WTC11 (cell line): ENCODE measurements at regions of chr9 and their contacts with region 1.

Region 1: DNA sequence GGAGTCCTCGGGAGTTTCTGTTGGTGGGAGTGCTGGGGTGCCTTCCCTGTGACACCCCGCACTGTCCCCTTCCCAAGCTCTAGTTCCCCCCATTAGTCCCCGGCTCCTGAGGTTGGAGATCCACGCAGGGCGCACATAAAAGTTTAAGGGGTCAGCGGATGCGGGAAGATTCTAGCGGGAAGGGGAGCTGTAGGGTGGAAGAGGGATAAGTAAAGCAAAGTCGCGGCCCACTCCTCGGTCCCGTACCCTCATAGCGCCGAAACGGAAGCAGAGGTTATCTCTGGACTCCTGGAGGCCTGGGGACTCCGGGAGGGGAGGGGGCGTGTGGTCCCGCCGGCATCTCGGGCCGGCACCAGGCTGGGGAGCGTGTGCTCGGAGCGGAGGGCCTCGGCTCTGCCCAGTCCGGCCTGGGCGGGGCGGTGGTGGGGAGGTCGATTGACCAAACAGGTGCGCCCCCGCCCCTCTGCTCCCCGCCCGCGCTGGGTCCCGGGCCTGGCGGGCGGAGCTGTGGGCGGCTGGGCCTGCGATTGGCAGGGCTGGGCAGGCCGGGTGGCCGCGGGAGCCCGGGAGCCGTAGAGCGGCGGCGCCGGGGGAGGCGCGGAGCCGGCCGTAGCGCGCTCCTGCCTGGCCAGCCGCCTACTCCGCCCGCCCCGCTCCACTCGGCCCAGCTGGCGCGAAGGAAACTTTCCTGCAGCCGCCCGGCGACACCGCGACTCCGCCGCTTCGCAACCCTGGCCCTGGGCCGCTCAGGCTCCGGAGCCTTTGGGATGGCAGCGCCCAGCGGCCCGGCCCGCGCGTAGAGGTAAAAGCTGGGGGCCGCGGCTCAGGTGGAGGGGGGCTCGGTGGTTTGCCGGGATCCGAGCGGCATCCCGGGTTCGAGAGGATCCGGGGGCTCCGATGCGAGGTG is 52.2 kb upstream of the DAB2IP start:
- DNase-seq: peak; percentile 94
- ATAC-seq: peak; percentile 83
- H3K4me3 Mint-ChIP-seq: peak overlapping the region; percentile 80
- H3K27ac Mint-ChIP-seq: peak overlapping the region; percentile 36; the same call in 1 of the 2 replicates
- H3K4me1 Mint-ChIP-seq: peaks cover 36% of the 10 kb centered on the region
- H3K27me3 Mint-ChIP-seq: peaks cover 21% of the 10 kb centered on the region
- CTCF ChIP-seq: no peak

Region 2: GRCh38 chr9:121455527-121456239 is 143.5 kb before region 1 on chr9:
- CTCF ChIA-PET with region 1: no interaction called
- POLR2A ChIA-PET with region 1: no interaction called
- DNase-seq: no peak
- ATAC-seq: no peak
- H3K4me3 Mint-ChIP-seq: no peak overlapping the region
- H3K27ac Mint-ChIP-seq: no peak overlapping the region
- H3K4me1 Mint-ChIP-seq: peaks cover 6% of the 10 kb centered on the region; the same call in 1 of the 2 replicates
- H3K27me3 Mint-ChIP-seq: no peaks in the 10 kb centered on the region; the same call in 1 of the 2 replicates
- CTCF ChIP-seq: no peak

Region 3: GRCh38 chr9:121529237-121529987 is 69.8 kb before region 1 on chr9:
- CTCF ChIA-PET with region 1: no interaction called
- POLR2A ChIA-PET with region 1: no interaction called
- DNase-seq: no peak
- ATAC-seq: no peak
- H3K4me3 Mint-ChIP-seq: no peak overlapping the region
- H3K27ac Mint-ChIP-seq: no peak overlapping the region
- H3K4me1 Mint-ChIP-seq: no peaks in the 10 kb centered on the region
- H3K27me3 Mint-ChIP-seq: peaks cover 5% of the 10 kb centered on the region
- CTCF ChIP-seq: no peak

Region 4: GRCh38 chr9:121557581-121558447 is 41.4 kb before region 1 on chr9:
- CTCF ChIA-PET with region 1: interaction called, 11 read pairs
- POLR2A ChIA-PET with region 1: interaction called, 3 read pairs
- DNase-seq: peak; percentile 49
- ATAC-seq: peak; percentile 85
- H3K4me3 Mint-ChIP-seq: no peak overlapping the region
- H3K27ac Mint-ChIP-seq: peak overlapping the region; percentile 60; the same call in 1 of the 2 replicates
- H3K4me1 Mint-ChIP-seq: peaks cover 28% of the 10 kb centered on the region
- H3K27me3 Mint-ChIP-seq: no peaks in the 10 kb centered on the region
- CTCF ChIP-seq: no peak

Region 5: DNA sequence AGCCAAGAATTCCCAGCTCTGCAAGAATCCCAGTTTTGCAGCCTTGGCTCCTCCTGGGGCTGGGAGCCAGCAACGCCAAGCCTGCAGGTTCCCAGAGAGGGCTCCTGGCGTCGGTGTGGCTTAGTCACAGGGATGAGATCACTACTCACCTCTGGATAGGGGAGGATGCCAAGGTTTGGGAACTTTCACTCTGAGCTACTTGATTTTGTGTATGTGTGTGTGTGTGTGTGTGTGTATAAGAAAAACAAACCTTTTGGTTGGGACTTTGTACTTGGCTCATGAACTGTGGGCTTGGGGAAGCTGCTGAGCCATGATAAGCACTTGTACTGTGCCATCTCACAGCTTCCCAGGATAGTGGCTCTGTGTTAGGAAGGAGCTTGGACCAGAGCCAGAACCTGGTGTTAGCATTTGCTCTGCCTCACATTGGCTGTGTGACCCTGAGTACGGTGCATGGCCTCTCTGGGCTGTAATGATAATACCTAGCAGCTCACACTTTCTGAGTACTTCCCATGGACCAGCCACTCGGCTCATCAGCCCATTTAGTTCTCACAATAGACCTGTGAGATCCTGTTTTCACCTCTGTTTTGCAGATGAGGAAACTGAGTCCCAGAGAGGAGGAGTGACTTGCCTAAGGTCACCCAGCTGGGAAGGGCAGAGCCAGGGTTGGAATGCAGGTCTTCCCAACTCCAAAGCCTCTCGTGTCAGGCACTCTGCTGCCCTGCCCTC is 10.8 kb after region 1 on chr9:
- CTCF ChIA-PET with region 1: interaction called, 16 read pairs
- POLR2A ChIA-PET with region 1: interaction called, 4 read pairs
- DNase-seq: no peak
- ATAC-seq: no peak
- H3K4me3 Mint-ChIP-seq: no peak overlapping the region
- H3K27ac Mint-ChIP-seq: no peak overlapping the region
- H3K4me1 Mint-ChIP-seq: peaks cover 36% of the 10 kb centered on the region
- H3K27me3 Mint-ChIP-seq: no peaks in the 10 kb centered on the region
- CTCF ChIP-seq: no peak

Region 6: GRCh38 chr9:121621113-121621449 is 21.9 kb after region 1 on chr9:
- CTCF ChIA-PET with region 1: interaction called, 29 read pairs
- POLR2A ChIA-PET with region 1: interaction called, 3 read pairs
- DNase-seq: peak; percentile 74
- ATAC-seq: peak; percentile 97
- H3K4me3 Mint-ChIP-seq: no peak overlapping the region
- H3K27ac Mint-ChIP-seq: peak overlapping the region; percentile 32
- H3K4me1 Mint-ChIP-seq: peaks cover 20% of the 10 kb centered on the region
- H3K27me3 Mint-ChIP-seq: no peaks in the 10 kb centered on the region
- CTCF ChIP-seq: no peak